Natural killer cell (primary cell): ENCODE measurements at regions of chr10 and their contacts with region 1.

Region 1: DNA sequence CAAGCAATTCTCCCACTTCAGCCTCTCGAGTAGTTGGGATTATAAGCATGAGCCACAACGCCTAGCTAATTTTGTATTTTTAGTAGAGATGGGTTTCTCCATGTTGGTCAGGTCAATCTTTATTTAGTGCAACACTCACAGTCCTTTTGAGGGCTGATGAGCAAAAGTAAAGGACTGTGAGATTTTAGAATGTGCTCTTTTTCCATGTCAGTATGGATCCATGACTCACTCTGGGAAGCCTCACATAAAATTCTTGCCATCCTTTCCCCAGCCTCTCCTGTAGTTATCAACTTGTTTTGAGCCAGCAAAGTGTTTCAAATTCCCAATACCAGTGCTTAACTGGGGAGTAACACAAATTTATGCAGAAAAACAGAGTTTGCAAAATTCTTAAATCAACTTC is 135.8 kb upstream of the CXCL12 start:
- DNase-seq: no peak
- ATAC-seq: no peak
- H3K4me3 ChIP-seq: no peak overlapping the region
- H3K4me3 Mint-ChIP-seq: no peak overlapping the region
- H3K27ac ChIP-seq: no peak overlapping the region
- H3K27ac Mint-ChIP-seq: no peak overlapping the region
- H3K4me1 ChIP-seq: no peaks in the 10 kb centered on the region
- H3K4me1 Mint-ChIP-seq: no peaks in the 10 kb centered on the region
- H3K27me3 ChIP-seq: no peaks in the 10 kb centered on the region
- H3K27me3 Mint-ChIP-seq: no peaks in the 10 kb centered on the region
- CTCF ChIP-seq: no peak

Region 2: DNA sequence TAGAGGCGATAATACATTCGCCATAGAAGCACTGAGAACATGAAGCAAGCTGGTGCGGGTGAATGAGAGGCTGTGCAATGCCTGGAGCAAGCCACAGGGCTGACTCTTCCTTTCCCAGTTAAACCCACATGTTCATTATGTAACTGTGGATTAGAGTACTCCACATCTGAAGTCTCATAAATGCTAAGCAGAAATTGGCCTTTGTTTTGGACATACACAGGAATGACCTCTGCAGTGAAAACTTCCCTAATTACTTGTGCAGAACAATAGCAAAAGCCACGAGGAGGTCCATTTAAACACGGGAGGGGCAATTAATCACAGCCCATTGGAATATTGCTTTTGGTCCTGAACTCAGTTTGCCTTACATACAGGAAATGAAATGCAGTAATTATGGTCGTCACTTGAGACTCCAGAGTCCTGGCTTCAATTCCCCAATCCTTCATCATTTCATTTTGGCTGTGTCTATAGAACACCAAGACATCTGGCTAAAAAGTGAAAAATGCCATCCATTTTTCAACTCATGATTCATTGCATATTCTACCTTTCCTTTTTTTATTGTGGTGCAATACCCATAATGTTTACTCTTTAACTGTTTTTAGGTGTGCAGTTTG is 57.0 kb before region 1 on chr10:
- intact Hi-C with region 1: loop called (anchors 10 kb)
- DNase-seq: no peak
- ATAC-seq: no peak
- H3K4me3 ChIP-seq: no peak overlapping the region
- H3K4me3 Mint-ChIP-seq: no peak overlapping the region
- H3K27ac ChIP-seq: no peak overlapping the region
- H3K27ac Mint-ChIP-seq: no peak overlapping the region
- H3K4me1 ChIP-seq: no peaks in the 10 kb centered on the region
- H3K4me1 Mint-ChIP-seq: peaks cover 0 to 13% of the 10 kb centered on the region in 2 donors
- H3K27me3 ChIP-seq: no peaks in the 10 kb centered on the region
- H3K27me3 Mint-ChIP-seq: peaks cover 0 to 18% of the 10 kb centered on the region in 2 donors
- CTCF ChIP-seq: no peak